ENCODE measurements at regions of chr6 and their contacts with region 1.

Region 1: DNA sequence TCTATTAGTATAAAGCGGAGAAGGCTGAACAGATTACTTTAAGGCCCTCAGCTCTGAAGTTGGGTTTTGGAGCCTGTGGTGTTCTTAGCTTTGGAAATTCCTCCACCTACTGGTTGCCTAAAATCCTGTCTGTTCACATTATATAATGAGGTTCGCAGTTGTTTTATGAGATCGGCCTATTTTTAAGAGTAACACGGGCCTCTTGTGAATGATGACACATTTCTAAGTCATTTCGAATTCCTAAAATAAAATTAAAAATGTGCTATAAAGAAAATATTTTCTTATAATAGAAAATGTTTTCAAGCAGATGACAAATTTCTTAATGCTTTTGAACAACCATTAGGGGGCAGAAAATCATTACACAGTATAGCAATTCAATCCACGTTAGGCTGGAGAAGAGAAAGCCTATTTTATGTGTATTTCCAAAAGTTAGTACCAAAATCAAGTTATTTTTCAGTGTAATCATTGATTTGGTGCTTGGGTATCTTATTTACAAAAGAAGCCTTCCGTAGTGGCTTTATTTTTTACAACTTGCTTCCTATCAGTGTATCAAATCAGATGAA is 15.8 kb upstream of the FAM8A1 start:
- DNase-seq: peak in 1 of 2 donors; percentile 33
- H3K4me3 ChIP-seq: peak overlapping the region in 1 of 2 donors; percentile 1
- H3K27ac ChIP-seq: peak overlapping the region; percentile 70
- H3K4me1 ChIP-seq: peaks cover 0 to 10% (median 2%) of the 10 kb centered on the region in 4 donors
- H3K27me3 ChIP-seq: no peaks in the 10 kb centered on the region
- CTCF ChIP-seq: peak; percentile 76 to 96

Region 2: GRCh38 chr6:17156112-17156921 is 428.0 kb before region 1 on chr6:
- intact Hi-C with region 1: loop called (anchors 2 kb)
- DNase-seq: peak; percentile 73 to 81
- H3K4me3 ChIP-seq: no peak overlapping the region
- H3K27ac ChIP-seq: no peak overlapping the region
- H3K4me1 ChIP-seq: no peaks in the 10 kb centered on the region
- H3K27me3 ChIP-seq: no peaks in the 10 kb centered on the region
- CTCF ChIP-seq: peak; percentile 69 to 90

Region 3: DNA sequence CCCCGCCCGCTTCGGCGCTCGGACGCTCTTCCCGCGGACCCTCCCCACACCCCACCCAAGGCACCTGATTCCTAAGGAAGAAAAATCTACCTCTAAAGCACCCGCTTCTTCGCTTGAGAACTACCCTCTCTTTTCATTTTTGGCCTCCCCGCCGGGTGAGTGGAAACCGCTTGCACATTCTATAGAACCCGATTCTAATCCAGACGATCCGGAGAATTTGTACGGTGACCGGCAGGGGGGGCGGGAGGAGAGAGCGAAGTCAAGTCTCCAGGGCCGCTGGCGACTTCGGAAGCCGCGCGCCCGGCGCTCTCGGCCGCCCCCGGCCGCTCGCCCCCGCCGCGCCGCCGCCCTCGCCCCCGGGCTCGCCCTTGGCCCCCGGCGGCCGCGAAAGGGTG is 303.2 kb before region 1 on chr6 and contains the start of gene RBM24:
- intact Hi-C with region 1: loop called (anchors 5 kb)
- DNase-seq: peak; percentile 64 to 82
- H3K4me3 ChIP-seq: peak within 1 kb of the TSS; percentile 82 to 94
- H3K27ac ChIP-seq: peak within 1 kb of the TSS; percentile 84 to 92
- H3K4me1 ChIP-seq: peaks cover 0 to 39% (median 2%) of the 10 kb centered on the region in 4 donors
- H3K27me3 ChIP-seq: no peaks in the 10 kb centered on the region
- CTCF ChIP-seq: peak in 1 of 2 experiments; percentile 52

Measured in tibial artery (tissue), 4 donors.